ENCODE measurements at regions of chr14 and their contacts with region 1.

Region 1: GRCh38 chr14:55579724-55580469 is at the start of gene KTN1:
- DNase-seq: peak; percentile 70 to 94 (median 84)
- ATAC-seq: peak; percentile 87
- H3K4me3 ChIP-seq: peak within 1 kb of the TSS; percentile 81
- H3K4me3 Mint-ChIP-seq: peak within 1 kb of the TSS; percentile 98
- H3K27ac ChIP-seq: peak within 1 kb of the TSS; percentile 68 to 82
- H3K27ac Mint-ChIP-seq: peak within 1 kb of the TSS; percentile 92
- H3K4me1 ChIP-seq: peaks cover 27% of the 10 kb centered on the region
- H3K4me1 Mint-ChIP-seq: peaks cover 28% of the 10 kb centered on the region
- H3K27me3 ChIP-seq: no peaks in the 10 kb centered on the region
- H3K27me3 Mint-ChIP-seq: no peaks in the 10 kb centered on the region
- CTCF ChIP-seq: no peak
- total RNA-seq, gene KTN1: 59.9 to 68.4 TPM

Region 2: GRCh38 chr14:54902521-54903420 is 677.1 kb before region 1 on chr14 and contains the start of gene GCH1:
- CTCF ChIA-PET with region 1: no interaction called
- POLR2A ChIA-PET with region 1: no interaction called
- intact Hi-C with region 1: loop called in 1 of 2 experiments (anchors 10 kb)
- DNase-seq: peak; percentile 42 to 91 (median 65)
- ATAC-seq: peak; percentile 69
- H3K4me3 ChIP-seq: peak within 1 kb of the TSS; percentile 97
- H3K4me3 Mint-ChIP-seq: peak within 1 kb of the TSS; percentile 97
- H3K27ac ChIP-seq: peak within 1 kb of the TSS; percentile 92 to 95
- H3K27ac Mint-ChIP-seq: peak within 1 kb of the TSS; percentile 85
- H3K4me1 ChIP-seq: peaks cover 35% of the 10 kb centered on the region
- H3K4me1 Mint-ChIP-seq: peaks cover 24% of the 10 kb centered on the region
- H3K27me3 ChIP-seq: no peaks in the 10 kb centered on the region
- H3K27me3 Mint-ChIP-seq: no peaks in the 10 kb centered on the region
- CTCF ChIP-seq: peak; percentile 80
- total RNA-seq, gene GCH1: 18.4 to 20.4 TPM

Region 3: GRCh38 chr14:55191203-55192053 is 388.5 kb before region 1 on chr14 and contains the start of gene DLGAP5:
- CTCF ChIA-PET with region 1: no interaction called
- POLR2A ChIA-PET with region 1: no interaction called
- intact Hi-C with region 1: loop called in 1 of 2 experiments (anchors 5 kb)
- DNase-seq: peak; percentile 71 to 96 (median 80)
- ATAC-seq: peak; percentile 98
- H3K4me3 ChIP-seq: peak within 1 kb of the TSS; percentile 74
- H3K4me3 Mint-ChIP-seq: peak within 1 kb of the TSS; percentile 90
- H3K27ac ChIP-seq: peak within 1 kb of the TSS in 1 of 2 donors; percentile 40
- H3K27ac Mint-ChIP-seq: peak within 1 kb of the TSS; percentile 14
- H3K4me1 ChIP-seq: peaks cover 14% of the 10 kb centered on the region
- H3K4me1 Mint-ChIP-seq: peaks cover 21% of the 10 kb centered on the region
- H3K27me3 ChIP-seq: no peaks in the 10 kb centered on the region
- H3K27me3 Mint-ChIP-seq: no peaks in the 10 kb centered on the region
- CTCF ChIP-seq: no peak
- total RNA-seq, gene DLGAP5: 0.25 TPM in 1 of 2 experiments, not detected in the other

Region 4: DNA sequence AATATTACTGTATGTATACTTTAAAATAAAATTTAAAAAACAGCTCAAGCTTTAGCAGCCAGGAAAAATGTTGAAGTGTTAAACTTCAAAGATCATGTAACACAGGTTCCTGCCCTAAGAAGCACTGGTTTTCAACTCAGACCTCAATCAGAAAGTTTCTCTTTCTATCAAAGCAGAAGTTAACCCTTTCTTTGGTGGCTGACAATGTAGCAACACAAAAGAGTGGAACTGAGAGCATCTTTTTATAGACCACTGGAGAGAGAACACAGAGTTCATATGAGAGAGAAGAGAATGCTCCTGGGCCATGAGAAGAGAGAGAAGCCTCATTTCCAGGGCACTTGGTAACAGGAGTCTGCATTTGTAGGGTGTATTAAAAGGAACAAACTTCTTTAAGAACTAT is 42.1 kb before region 1 on chr14:
- CTCF ChIA-PET with region 1: no interaction called
- POLR2A ChIA-PET with region 1: no interaction called
- intact Hi-C with region 1: no loop called
- DNase-seq: no peak
- ATAC-seq: no peak
- H3K4me3 ChIP-seq: no peak overlapping the region
- H3K4me3 Mint-ChIP-seq: no peak overlapping the region
- H3K27ac ChIP-seq: no peak overlapping the region
- H3K27ac Mint-ChIP-seq: no peak overlapping the region
- H3K4me1 ChIP-seq: no peaks in the 10 kb centered on the region
- H3K4me1 Mint-ChIP-seq: no peaks in the 10 kb centered on the region
- H3K27me3 ChIP-seq: no peaks in the 10 kb centered on the region
- H3K27me3 Mint-ChIP-seq: no peaks in the 10 kb centered on the region
- CTCF ChIP-seq: no peak

Region 5: DNA sequence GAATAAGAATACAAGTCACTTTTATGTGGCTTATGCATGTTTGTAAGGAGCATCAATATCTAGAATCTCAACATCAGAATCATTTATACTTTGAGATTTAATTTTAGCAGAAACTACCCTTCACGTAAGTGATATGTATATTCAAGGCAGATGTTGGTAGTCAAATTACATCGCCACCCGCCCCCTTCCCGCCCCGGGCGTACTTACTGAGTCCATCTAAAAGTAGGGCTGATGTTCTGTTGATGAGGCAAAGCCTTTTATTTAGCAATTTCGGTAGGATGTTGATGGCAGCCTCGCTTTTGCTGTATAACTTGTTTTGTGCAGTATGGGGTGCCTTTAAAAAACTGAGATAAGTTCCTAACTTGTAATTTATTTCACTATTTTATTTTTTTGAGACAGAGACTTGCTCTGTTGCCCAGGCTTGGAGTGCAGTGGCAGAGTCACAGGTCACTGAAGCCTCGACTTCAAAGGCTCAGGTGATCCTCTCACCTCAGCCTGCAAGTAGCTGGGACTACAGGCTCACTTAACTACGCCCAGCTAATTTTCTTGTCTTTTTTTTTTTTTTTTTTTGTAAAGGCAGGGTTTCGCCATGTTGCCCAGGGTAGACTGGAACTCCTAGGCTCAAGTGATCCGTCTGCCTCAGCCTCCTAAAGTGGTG is 30.9 kb after region 1 on chr14:
- CTCF ChIA-PET with region 1: no interaction called
- POLR2A ChIA-PET with region 1: no interaction called
- intact Hi-C with region 1: loop called in 1 of 2 experiments (anchors 5 kb)
- DNase-seq: no peak
- ATAC-seq: no peak
- H3K4me3 ChIP-seq: no peak overlapping the region
- H3K4me3 Mint-ChIP-seq: no peak overlapping the region
- H3K27ac ChIP-seq: no peak overlapping the region
- H3K27ac Mint-ChIP-seq: no peak overlapping the region
- H3K4me1 ChIP-seq: no peaks in the 10 kb centered on the region
- H3K4me1 Mint-ChIP-seq: peaks cover 55% of the 10 kb centered on the region
- H3K27me3 ChIP-seq: no peaks in the 10 kb centered on the region
- H3K27me3 Mint-ChIP-seq: no peaks in the 10 kb centered on the region
- CTCF ChIP-seq: no peak

Region 6: DNA sequence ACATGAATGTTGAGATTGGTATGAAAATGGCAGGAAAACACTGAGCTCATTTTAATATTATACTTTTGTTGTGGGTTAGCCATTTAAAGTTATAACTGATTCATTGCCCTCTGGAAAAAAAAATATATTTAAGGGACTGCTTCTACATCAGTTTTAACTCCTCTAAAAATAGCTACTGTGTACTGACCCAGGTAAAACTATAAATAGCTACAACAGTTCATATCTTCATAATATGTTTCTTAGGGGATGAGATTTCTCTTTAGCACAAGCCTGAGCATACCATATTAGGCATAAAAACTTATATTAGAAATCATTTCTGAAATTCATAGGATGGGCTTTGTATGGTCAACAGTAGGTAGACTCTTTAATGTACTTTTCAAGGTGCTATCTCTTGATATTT is 81.1 kb after region 1 on chr14:
- CTCF ChIA-PET with region 1: no interaction called
- POLR2A ChIA-PET with region 1: no interaction called
- intact Hi-C with region 1: no loop called
- DNase-seq: no peak
- ATAC-seq: no peak
- H3K4me3 ChIP-seq: no peak overlapping the region
- H3K4me3 Mint-ChIP-seq: no peak overlapping the region
- H3K27ac ChIP-seq: no peak overlapping the region
- H3K27ac Mint-ChIP-seq: no peak overlapping the region
- H3K4me1 ChIP-seq: no peaks in the 10 kb centered on the region
- H3K4me1 Mint-ChIP-seq: peaks cover 17% of the 10 kb centered on the region
- H3K27me3 ChIP-seq: no peaks in the 10 kb centered on the region
- H3K27me3 Mint-ChIP-seq: no peaks in the 10 kb centered on the region
- CTCF ChIP-seq: no peak

Region 7: GRCh38 chr14:55899531-55899930 is 319.6 kb after region 1 on chr14:
- CTCF ChIA-PET with region 1: no interaction called
- POLR2A ChIA-PET with region 1: no interaction called
- intact Hi-C with region 1: no loop called
- DNase-seq: no peak
- ATAC-seq: no peak
- H3K4me3 ChIP-seq: no peak overlapping the region
- H3K4me3 Mint-ChIP-seq: no peak overlapping the region
- H3K27ac ChIP-seq: no peak overlapping the region
- H3K27ac Mint-ChIP-seq: no peak overlapping the region
- H3K4me1 ChIP-seq: no peaks in the 10 kb centered on the region
- H3K4me1 Mint-ChIP-seq: no peaks in the 10 kb centered on the region
- H3K27me3 ChIP-seq: no peaks in the 10 kb centered on the region
- H3K27me3 Mint-ChIP-seq: no peaks in the 10 kb centered on the region
- CTCF ChIP-seq: no peak

Region 8: DNA sequence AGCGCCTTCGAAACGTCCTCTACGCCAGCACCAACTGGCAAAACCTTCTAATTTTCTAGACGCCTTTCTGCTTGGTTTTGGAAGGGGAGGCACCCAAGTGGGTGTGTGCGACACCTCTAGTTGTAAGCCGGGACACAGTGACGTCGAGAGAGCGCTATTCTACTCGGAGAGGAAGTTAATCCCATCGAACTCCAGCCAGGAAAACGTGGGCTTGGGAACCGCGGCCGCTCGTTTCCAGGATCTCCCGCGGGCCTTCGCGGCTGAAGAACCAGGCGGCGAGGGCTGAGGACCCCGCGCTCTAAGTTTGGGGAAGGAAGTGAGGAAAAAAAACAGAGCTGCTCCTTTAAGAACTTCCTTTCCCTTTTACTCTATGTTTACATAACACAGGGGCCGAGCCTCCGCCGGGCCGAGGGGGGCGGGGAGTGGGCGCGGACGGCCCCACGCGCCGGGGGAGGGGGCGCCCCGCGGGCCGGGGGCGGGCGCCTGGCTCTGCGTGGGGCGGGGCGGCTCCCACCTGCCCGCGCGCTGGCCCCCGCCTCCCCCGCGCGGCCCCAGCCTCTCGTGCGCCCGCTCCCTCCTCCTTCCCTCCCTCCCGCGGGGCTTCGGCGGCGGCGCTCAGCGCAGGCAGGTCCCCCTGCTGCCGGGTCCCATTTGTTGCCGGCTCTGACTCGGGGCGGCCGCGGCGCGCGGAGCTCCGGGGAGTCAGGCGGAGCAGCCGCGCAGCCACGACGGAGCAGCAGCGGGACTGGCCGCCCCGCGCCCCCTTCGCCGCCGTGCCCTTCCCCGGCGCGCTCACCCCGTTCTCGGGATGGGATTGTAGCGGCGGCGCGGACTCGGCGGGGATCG is 538.1 kb after region 1 on chr14 and contains the start of gene PELI2:
- CTCF ChIA-PET with region 1: no interaction called
- POLR2A ChIA-PET with region 1: no interaction called
- intact Hi-C with region 1: loop called (anchors 5 to 10 kb)
- DNase-seq: peak; percentile 72 to 95 (median 82)
- ATAC-seq: peak; percentile 81
- H3K4me3 ChIP-seq: peak within 1 kb of the TSS; percentile 75
- H3K4me3 Mint-ChIP-seq: peak within 1 kb of the TSS; percentile 95
- H3K27ac ChIP-seq: peak within 1 kb of the TSS; percentile 91 to 94
- H3K27ac Mint-ChIP-seq: peak within 1 kb of the TSS; percentile 82
- H3K4me1 ChIP-seq: peaks cover 27% of the 10 kb centered on the region
- H3K4me1 Mint-ChIP-seq: peaks cover 52% of the 10 kb centered on the region
- H3K27me3 ChIP-seq: peaks cover 0 to 9% of the 10 kb centered on the region in 2 experiments
- H3K27me3 Mint-ChIP-seq: peaks cover 8% of the 10 kb centered on the region
- CTCF ChIP-seq: no peak
- total RNA-seq, gene PELI2: 12.2 to 15.9 TPM

Region 9: DNA sequence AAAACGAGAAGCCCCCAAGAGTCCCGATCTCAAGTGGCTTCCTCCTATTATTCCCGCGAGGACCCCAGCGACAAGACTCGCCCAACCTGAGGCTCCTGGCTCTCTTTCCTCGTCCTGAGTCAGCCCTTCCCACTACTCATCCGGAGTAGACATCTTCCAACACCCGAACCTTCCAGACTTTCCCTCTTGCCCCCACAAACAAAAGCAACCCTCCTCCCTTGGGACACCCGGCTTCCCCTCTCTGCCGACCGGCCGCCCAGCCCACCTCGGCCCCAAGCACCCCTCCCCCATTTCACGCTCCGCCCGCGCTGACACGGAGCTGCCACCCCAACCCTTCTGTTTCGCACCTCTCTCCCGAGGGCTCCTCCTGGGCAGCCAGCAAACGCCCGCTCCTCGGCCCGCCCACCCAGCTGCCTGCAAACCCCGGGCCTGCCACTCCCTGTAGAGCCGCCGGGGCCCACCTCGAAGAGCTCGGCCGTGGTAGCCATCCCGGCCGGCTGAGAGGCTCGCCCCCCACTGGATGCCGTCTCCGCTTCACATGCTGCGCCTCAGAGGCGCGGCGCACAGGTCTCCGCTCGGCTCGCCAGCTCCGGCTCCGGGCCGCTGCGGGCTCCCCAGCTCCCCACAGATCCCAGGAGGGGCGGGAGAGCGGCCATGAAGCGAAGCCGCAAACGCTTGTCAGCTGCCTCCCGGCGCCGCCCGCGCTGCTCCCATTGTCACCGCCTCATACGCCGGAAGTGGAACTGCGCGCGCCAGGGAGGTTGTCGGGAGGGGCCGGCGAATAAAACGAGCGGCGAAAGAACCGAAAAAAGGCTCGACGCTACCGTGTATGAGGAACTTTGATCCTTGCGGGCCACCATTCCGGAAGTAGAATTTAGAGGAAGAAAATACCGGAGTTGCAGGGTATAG is 1688.5 kb after region 1 on chr14 and contains the starts of genes AP5M1 and EXOC5:
- CTCF ChIA-PET with region 1: no interaction called
- POLR2A ChIA-PET with region 1: interaction called, 3 read pairs
- intact Hi-C with region 1: loop called in 1 of 2 experiments (anchors 5 kb)
- DNase-seq: peak; percentile 81 to 97 (median 89)
- ATAC-seq: peak; percentile 84
- H3K4me3 ChIP-seq: peak within 1 kb of the TSS; percentile 76
- H3K4me3 Mint-ChIP-seq: peak within 1 kb of the TSS; percentile 99
- H3K27ac ChIP-seq: peak within 1 kb of the TSS; percentile 91
- H3K27ac Mint-ChIP-seq: peak within 1 kb of the TSS; percentile 99
- H3K4me1 ChIP-seq: peaks cover 17% of the 10 kb centered on the region
- H3K4me1 Mint-ChIP-seq: peaks cover 87% of the 10 kb centered on the region
- H3K27me3 ChIP-seq: no peaks in the 10 kb centered on the region
- H3K27me3 Mint-ChIP-seq: no peaks in the 10 kb centered on the region
- CTCF ChIP-seq: no peak
- total RNA-seq, gene AP5M1: 39.2 to 40.4 TPM
- total RNA-seq, gene EXOC5: 17.1 to 18.1 TPM